Activated CD8-positive, alpha-beta T cell treated with anti-CD3 and anti-CD28 coated beads for 36 hours (primary cell): ENCODE measurements at regions of chr3 and their contacts with region 1.

Region 1: GRCh38 chr3:187745201-187746058 is at the start of gene BCL6:
- DNase-seq: peak; percentile 93
- ATAC-seq: peak; percentile 57
- H3K4me3 Mint-ChIP-seq: peak within 1 kb of the TSS; percentile 93
- H3K27ac Mint-ChIP-seq: peak within 1 kb of the TSS; percentile 98
- H3K4me1 Mint-ChIP-seq: peaks cover 56% of the 10 kb centered on the region
- H3K27me3 Mint-ChIP-seq: no peaks in the 10 kb centered on the region
- CTCF ChIP-seq: no peak
- total RNA-seq, gene BCL6: 13.7 to 14.0 TPM

Region 2: DNA sequence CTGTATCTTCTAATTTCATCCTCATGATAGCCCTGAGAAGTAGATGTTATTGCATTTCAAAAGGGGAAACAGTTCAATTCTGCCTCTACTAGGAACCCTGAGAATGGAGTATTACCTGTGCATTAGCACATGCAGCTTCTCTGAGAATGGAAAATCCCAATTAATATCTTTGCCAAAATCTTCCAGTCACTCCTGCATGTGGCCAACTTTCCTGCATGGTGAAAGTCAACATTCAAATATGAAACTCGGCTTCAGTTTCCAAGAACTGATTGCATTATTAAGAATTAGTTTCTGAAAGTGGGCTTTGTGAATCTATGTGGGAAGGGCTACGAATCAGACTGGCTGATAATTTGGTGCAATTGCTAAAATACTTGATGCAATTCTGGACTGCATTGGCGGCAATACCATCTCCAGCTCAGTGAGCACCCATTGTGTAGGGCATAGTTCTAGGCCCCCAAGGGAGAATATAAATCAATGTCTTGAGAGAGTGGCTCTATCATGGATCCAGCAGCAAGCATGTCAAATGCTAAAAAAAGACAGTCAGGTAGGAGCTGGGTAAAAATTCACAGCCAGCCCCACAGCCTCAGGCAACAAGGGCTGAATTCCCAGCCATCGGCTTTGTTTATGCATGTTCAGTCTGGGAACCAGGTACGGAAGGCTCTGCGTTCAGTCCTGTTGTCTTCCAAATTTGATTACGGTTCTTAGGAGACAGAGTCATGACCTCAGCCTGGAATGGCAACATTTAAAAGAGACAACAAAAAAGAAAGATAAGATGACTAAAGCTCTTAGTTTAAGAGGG is 18.6 kb after region 1 on chr3:
- CTCF ChIA-PET with region 1: interaction called, 19 read pairs
- POLR2A ChIA-PET with region 1: interaction called, 5 read pairs
- intact Hi-C with region 1: no loop called
- DNase-seq: no peak
- ATAC-seq: no peak
- H3K4me3 Mint-ChIP-seq: no peak overlapping the region
- H3K27ac Mint-ChIP-seq: no peak overlapping the region
- H3K4me1 Mint-ChIP-seq: peaks cover 8% of the 10 kb centered on the region
- H3K27me3 Mint-ChIP-seq: peaks cover 5% of the 10 kb centered on the region
- CTCF ChIP-seq: no peak

Region 3: DNA sequence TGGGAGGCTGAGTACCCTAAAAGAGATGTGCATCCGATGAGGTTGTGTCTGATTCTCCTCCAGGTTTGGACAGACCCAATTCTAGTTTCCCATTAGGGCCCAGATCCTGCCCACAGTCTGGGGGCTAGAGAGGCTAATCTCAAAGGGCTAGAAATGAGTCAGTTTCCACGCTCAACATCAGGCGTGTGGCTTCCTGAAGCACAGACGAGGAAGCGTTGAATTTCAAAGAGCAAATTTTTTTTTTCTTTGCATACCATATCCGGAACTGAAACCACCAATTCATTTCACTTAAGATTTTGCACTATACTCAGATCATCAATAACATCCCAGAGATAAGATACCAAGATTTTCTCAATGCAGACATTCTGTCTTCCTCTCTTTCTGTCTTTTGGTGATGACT is 173.6 kb after region 1 on chr3:
- CTCF ChIA-PET with region 1: interaction called, 29 read pairs
- POLR2A ChIA-PET with region 1: interaction called, 5 read pairs
- intact Hi-C with region 1: loop called (anchors 2 kb)
- DNase-seq: peak; percentile 79
- ATAC-seq: peak; percentile 62
- H3K4me3 Mint-ChIP-seq: peak overlapping the region; percentile 60
- H3K27ac Mint-ChIP-seq: peak overlapping the region; percentile 93
- H3K4me1 Mint-ChIP-seq: peaks cover 70% of the 10 kb centered on the region
- H3K27me3 Mint-ChIP-seq: no peaks in the 10 kb centered on the region
- CTCF ChIP-seq: no peak

Region 4: GRCh38 chr3:188061133-188061532 is 315.7 kb after region 1 on chr3:
- CTCF ChIA-PET with region 1: interaction called, 13 read pairs
- POLR2A ChIA-PET with region 1: interaction called, 7 read pairs
- intact Hi-C with region 1: loop called (anchors 5 kb)
- DNase-seq: peak; percentile 87
- ATAC-seq: peak; percentile 98
- H3K4me3 Mint-ChIP-seq: no peak overlapping the region
- H3K27ac Mint-ChIP-seq: peak overlapping the region; percentile 87
- H3K4me1 Mint-ChIP-seq: peaks cover 38% of the 10 kb centered on the region
- H3K27me3 Mint-ChIP-seq: no peaks in the 10 kb centered on the region
- CTCF ChIP-seq: peak; percentile 25

Region 5: GRCh38 chr3:188286087-188286513 is 540.7 kb after region 1 on chr3:
- CTCF ChIA-PET with region 1: interaction called, 59 read pairs
- POLR2A ChIA-PET with region 1: interaction called, 11 read pairs
- intact Hi-C with region 1: loop called (anchors 10 kb)
- DNase-seq: no peak
- ATAC-seq: no peak
- H3K4me3 Mint-ChIP-seq: no peak overlapping the region
- H3K27ac Mint-ChIP-seq: peak overlapping the region; percentile 32
- H3K4me1 Mint-ChIP-seq: peaks cover 53% of the 10 kb centered on the region
- H3K27me3 Mint-ChIP-seq: no peaks in the 10 kb centered on the region
- CTCF ChIP-seq: no peak

Region 6: DNA sequence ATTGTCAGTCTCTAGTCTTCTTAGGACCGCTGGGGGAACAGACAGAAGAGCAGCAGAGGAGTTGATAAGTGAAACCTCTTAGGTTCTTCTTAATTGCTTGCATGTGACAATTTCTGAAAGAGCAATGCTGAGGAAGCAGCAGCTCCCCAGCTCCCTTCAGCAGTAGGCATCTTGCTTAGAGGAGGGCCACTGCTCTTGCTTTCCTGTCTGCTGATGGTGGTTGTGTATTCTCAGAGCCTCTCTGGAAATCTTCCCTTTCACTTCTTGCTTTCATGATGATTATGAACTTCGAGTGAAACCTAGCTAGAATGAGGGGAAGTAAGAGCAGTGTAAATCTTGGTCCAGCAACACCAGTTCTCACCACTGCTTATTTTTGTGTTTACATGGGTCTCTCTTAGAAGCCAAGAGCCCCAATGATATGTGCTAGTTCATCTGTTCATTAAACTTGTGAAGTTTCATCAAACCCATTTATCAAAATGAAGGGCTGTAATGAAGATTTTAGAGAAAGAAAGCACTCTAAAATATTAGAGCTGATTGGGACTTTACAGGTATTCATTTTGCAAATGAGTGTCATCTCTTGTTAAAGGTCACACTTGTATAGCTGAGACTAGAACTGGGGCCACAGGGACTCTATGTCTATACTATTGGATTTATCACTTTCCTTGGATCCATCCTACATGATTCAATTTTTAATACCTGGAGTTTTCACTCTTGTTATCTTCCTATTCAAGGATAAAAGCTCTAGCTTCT is 655.2 kb after region 1 on chr3:
- CTCF ChIA-PET with region 1: interaction called, 24 read pairs
- POLR2A ChIA-PET with region 1: interaction called, 4 read pairs
- intact Hi-C with region 1: loop called (anchors 10 kb)
- DNase-seq: peak; percentile 51
- ATAC-seq: peak; percentile 83
- H3K4me3 Mint-ChIP-seq: no peak overlapping the region
- H3K27ac Mint-ChIP-seq: peak overlapping the region; percentile 71
- H3K4me1 Mint-ChIP-seq: peaks cover 67% of the 10 kb centered on the region
- H3K27me3 Mint-ChIP-seq: no peaks in the 10 kb centered on the region
- CTCF ChIP-seq: no peak

Region 7: GRCh38 chr3:189041482-189042090 is 1296.2 kb after region 1 on chr3:
- CTCF ChIA-PET with region 1: interaction called, 87 read pairs
- POLR2A ChIA-PET with region 1: no interaction called
- intact Hi-C with region 1: loop called (anchors 10 kb)
- DNase-seq: peak; percentile 89
- ATAC-seq: peak; percentile 90
- H3K4me3 Mint-ChIP-seq: no peak overlapping the region
- H3K27ac Mint-ChIP-seq: peak overlapping the region; percentile 75
- H3K4me1 Mint-ChIP-seq: peaks cover 45% of the 10 kb centered on the region
- H3K27me3 Mint-ChIP-seq: no peaks in the 10 kb centered on the region
- CTCF ChIP-seq: peak; percentile 85